ENCODE measurements at regions of chr5 and their contacts with region 1.

Region 1: GRCh38 chr5:38441453-38442246 is 114.8 kb downstream of the LIFR start:
- DNase-seq: peak; percentile 92 to 93
- H3K4me3 ChIP-seq: no peak overlapping the region
- H3K27ac ChIP-seq: no peak overlapping the region
- H3K4me1 ChIP-seq: peaks cover 0 to 9% of the 10 kb centered on the region in 2 donors
- H3K27me3 ChIP-seq: no peaks in the 10 kb centered on the region
- CTCF ChIP-seq: peak; percentile 88 to 98 (median 94)
- POLR2A ChIP-seq: no peak

Region 2: GRCh38 chr5:38323645-38324295 is 117.9 kb before region 1 on chr5:
- intact Hi-C with region 1: no loop called
- DNase-seq: no peak
- H3K4me3 ChIP-seq: no peak overlapping the region
- H3K27ac ChIP-seq: no peak overlapping the region
- H3K4me1 ChIP-seq: no peaks in the 10 kb centered on the region
- H3K27me3 ChIP-seq: no peaks in the 10 kb centered on the region
- CTCF ChIP-seq: no peak
- POLR2A ChIP-seq: no peak

Region 3: DNA sequence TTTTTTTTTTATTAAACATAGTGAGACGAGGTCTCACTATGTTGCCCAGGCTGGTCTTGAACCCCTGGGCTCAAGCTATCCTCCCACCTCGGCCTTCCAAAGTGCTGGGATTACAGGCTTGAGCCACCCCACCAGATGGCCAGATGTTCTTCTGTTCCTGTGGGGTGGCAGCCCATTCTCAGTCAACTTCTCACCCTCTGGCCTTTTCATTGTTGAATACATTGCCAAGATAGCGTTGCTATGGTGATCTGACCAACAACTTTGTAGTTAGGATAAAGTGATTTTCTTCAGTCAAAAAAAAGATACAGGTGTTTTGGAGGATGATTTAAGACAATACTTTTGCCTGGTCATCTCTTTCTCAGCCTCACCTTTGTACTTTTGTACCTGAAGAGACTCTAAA is 74.2 kb before region 1 on chr5:
- intact Hi-C with region 1: no loop called
- DNase-seq: no peak
- H3K4me3 ChIP-seq: no peak overlapping the region
- H3K27ac ChIP-seq: no peak overlapping the region
- H3K4me1 ChIP-seq: no peaks in the 10 kb centered on the region
- H3K27me3 ChIP-seq: no peaks in the 10 kb centered on the region
- CTCF ChIP-seq: no peak
- POLR2A ChIP-seq: no peak

Region 4: DNA sequence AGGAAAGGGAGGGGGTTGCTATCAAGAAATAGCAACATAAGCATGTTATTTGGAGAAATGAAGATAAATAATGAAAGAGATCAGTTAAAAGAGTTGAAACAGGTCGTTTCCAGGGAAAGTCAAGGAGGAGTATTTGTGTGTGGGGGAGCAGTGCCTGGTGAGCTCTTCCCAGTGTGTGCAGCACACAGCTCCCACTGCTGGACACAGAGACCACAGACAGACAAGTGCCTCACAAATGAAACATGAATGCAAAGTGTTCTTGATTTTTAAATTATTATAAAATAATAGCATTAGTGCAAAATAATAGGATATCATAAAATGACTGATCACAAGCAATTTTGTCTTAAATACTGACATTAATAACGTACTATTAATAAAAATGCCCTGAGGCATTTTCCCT is 74.0 kb after region 1 on chr5:
- intact Hi-C with region 1: loop called (anchors 10 kb)
- DNase-seq: no peak
- H3K4me3 ChIP-seq: no peak overlapping the region
- H3K27ac ChIP-seq: no peak overlapping the region
- H3K4me1 ChIP-seq: no peaks in the 10 kb centered on the region
- H3K27me3 ChIP-seq: no peaks in the 10 kb centered on the region
- CTCF ChIP-seq: peak in 1 of 6 experiments; percentile 43
- POLR2A ChIP-seq: no peak

Region 5: DNA sequence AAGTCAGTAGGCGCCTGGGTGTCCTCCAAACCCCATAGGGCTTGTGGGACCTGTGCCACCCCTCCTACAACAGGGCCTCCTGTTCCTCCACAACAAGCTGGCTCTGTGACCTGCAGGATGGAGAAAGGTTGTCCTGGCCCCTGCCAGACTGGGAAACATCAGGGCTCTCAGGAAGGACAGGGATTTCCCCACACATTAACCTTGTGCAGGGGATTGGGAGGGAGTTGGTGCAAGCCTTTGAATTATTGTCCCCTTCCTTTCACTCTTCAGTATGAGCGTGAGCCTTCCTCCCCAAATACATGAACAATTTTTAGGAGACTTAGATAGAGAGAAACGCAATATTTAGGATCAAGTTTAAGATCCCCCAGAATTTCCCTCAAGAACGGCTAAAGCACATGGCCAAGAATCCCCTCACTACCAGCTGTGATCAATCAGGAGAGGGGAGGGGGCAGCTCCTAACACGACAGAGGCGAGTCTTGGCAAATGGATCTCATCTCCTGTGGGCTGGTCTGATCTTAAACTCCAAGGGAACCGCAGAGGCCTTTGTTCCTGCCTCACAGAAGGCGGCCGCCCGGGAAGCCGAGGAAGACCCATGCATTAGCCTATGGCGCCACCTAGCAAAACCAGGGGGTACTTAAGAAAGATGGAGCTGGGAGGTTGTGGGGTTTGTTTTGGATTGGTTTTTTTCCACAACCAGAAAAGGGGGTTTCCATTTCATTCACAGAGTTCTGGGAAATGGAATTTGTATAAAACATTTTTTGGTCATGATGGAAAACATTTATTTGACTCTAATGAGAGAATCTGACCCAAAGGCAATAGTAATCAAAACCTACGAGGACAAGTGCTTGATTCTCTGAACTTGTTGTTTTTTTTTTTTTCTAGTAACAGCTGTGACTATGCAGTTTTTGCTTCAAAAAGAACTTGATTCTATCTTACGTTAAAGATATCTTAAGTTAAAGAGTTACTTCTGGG is 368.0 kb after region 1 on chr5:
- intact Hi-C with region 1: loop called (anchors 5 kb)
- DNase-seq: peak; percentile 80 to 86
- H3K4me3 ChIP-seq: no peak overlapping the region
- H3K27ac ChIP-seq: no peak overlapping the region
- H3K4me1 ChIP-seq: peaks cover 3 to 8% of the 10 kb centered on the region in 2 donors
- H3K27me3 ChIP-seq: no peaks in the 10 kb centered on the region
- CTCF ChIP-seq: peak; percentile 71 to 92 (median 83)
- POLR2A ChIP-seq: no peak